ENCODE measurements at regions of chr3 and their contacts with region 1.

Region 1: GRCh38 chr3:126348308-126348920 is 8.8 kb downstream of the KLF15 start:
- DNase-seq: peak in 2 of 3 donors; percentile 20 to 41
- ATAC-seq: no peak
- H3K4me3 ChIP-seq: no peak overlapping the region
- H3K27ac ChIP-seq: no peak overlapping the region
- H3K4me1 ChIP-seq: peaks cover 21% of the 10 kb centered on the region
- H3K27me3 ChIP-seq: no peaks in the 10 kb centered on the region

Region 2: GRCh38 chr3:126259411-126260391 is 88.7 kb before region 1 on chr3:
- intact Hi-C with region 1: no loop called
- DNase-seq: peak; percentile 50 to 90 (median 88)
- ATAC-seq: peak; percentile 77 to 79
- H3K4me3 ChIP-seq: no peak overlapping the region
- H3K27ac ChIP-seq: no peak overlapping the region
- H3K4me1 ChIP-seq: no peaks in the 10 kb centered on the region
- H3K27me3 ChIP-seq: no peaks in the 10 kb centered on the region

Region 3: GRCh38 chr3:126300761-126301481 is 47.5 kb before region 1 on chr3:
- intact Hi-C with region 1: loop called in 1 of 4 experiments (anchors 5 kb)
- DNase-seq: peak; percentile 38 to 75 (median 71)
- ATAC-seq: peak; percentile 88 to 93
- H3K4me3 ChIP-seq: no peak overlapping the region
- H3K27ac ChIP-seq: no peak overlapping the region
- H3K4me1 ChIP-seq: no peaks in the 10 kb centered on the region
- H3K27me3 ChIP-seq: no peaks in the 10 kb centered on the region

Measured in right cardiac atrium (tissue), 5 donors.